Heart left ventricle (tissue), 16 donors: ENCODE measurements at regions of chr19 and their contacts with region 1.

Region 1: DNA sequence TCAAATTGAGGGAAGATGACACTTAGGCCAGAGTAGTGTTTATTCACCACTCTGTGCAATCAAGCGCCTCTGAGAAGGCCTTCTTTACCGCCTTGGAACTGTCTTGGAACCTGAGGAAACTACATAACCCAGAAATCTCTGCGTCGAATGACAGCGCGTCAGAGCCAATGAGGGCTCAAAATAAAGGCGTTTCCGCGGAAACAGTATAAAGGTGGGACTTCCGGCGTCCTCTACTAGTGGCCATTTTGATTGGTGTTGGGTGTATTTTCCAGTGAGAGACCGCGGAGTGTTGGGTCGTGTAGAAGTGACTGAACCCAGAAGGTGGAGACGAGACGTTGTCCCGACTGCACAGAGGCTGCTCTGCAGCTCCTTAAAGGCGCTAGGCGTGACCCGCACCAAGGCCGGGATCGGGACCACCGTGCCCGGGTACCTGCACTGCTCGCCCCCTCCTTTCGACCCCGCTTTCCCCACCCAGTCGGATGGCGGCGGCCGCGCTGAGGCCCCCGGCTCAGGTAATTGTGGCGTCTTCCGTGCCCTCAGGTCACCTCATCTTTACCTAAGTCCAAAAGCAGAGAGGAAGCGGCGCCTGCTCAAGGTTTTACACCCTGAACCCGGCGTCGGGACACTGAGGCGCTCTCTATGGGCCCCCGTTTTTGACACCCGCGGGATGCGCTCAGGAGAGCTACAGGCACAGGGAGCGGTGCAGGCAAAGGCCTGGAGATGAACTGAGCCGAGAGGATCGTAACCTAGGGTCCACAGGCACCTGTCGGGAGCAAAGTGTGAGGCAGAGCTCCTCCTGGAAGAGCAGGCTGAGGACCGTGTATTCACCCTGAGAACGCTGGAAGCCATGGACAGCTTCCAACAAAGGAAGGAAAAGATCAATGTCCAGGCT is at the start of gene ZNF776:
- DNase-seq: peak; percentile 79 to 89 (median 88)
- ATAC-seq: peak; percentile 93 to 99 (median 98)
- H3K4me3 ChIP-seq: peak within 1 kb of the TSS; percentile 62 to 99 (median 90)
- H3K27ac ChIP-seq: peak within 1 kb of the TSS; percentile 45 to 91 (median 84)
- H3K4me1 ChIP-seq: peaks cover 0 to 29% (median 15%) of the 10 kb centered on the region in 12 donors
- H3K27me3 ChIP-seq: no peaks in the 10 kb centered on the region
- CTCF ChIP-seq: no peak
- POLR2A ChIP-seq: peak in 1 of 2 donors; percentile 63
- total RNA-seq, gene ZNF776: 8.1 to 17.3 (median 12.9) TPM

Region 2: GRCh38 chr19:57830071-57830602 is 83.3 kb after region 1 on chr19 and contains the start of gene ZNF587B:
- intact Hi-C with region 1: no loop called
- DNase-seq: peak; percentile 72 to 83 (median 76)
- ATAC-seq: peak; percentile 89 to 95 (median 92)
- H3K4me3 ChIP-seq: peak within 1 kb of the TSS; percentile 13 to 73 (median 52)
- H3K27ac ChIP-seq: peak within 1 kb of the TSS; percentile 34 to 83 (median 74)
- H3K4me1 ChIP-seq: peaks cover 0 to 31% (median 14%) of the 10 kb centered on the region in 12 donors
- H3K27me3 ChIP-seq: no peaks in the 10 kb centered on the region
- CTCF ChIP-seq: peak in 11 of 12 donors; percentile 14 to 67 (median 43)
- POLR2A ChIP-seq: peak in 1 of 2 donors; percentile 25
- total RNA-seq, gene ZNF587B: 4.6 to 9.2 (median 6.5) TPM

Region 3: DNA sequence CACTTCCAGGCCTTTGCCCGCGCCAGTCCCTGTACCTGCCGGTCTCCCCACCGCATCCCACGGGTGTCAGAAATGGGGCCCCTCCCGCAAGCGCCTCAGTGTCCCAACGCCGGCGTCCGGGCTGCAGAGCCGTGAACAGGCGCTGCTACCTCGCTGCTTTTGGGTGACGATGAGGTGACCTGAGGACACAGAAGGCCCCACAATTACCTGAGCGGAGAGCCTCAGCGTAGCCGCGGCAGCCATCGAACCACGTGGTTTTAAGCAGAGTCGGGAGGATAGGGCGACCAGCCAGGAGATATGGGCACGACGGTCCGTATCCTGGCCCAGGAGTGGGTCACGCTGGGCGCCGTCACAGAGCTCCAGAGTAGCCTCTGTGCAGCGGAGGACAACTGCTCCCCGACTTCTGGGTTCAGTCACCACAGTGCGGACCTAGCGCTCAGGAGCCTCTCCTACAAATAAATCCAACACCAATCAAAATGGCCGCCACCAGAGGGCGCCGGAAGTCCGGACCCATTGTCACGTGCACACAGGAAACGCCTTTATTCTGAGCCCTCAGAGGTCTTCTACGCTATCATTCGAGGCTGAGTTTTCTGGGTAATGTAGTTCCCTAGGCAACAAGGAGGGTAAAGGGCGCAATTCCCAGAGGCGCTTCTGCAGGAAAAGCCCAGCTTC is 141.9 kb after region 1 on chr19 and contains the start of gene ZNF814:
- intact Hi-C with region 1: loop called in 3 of 10 experiments (anchors 10 kb)
- DNase-seq: peak; percentile 86 to 90 (median 88)
- ATAC-seq: peak; percentile 91 to 96 (median 94)
- H3K4me3 ChIP-seq: peak within 1 kb of the TSS; percentile 25 to 91 (median 78)
- H3K27ac ChIP-seq: peak within 1 kb of the TSS in 11 of 12 donors; percentile 56 to 84 (median 77)
- H3K4me1 ChIP-seq: peaks cover 0 to 22% (median 11%) of the 10 kb centered on the region in 12 donors
- H3K27me3 ChIP-seq: no peaks in the 10 kb centered on the region
- CTCF ChIP-seq: peak; percentile 24 to 77 (median 49)
- POLR2A ChIP-seq: peak in 1 of 2 donors; percentile 25
- total RNA-seq, gene ZNF814: 8.7 to 16.4 (median 10.5) TPM

Region 4: DNA sequence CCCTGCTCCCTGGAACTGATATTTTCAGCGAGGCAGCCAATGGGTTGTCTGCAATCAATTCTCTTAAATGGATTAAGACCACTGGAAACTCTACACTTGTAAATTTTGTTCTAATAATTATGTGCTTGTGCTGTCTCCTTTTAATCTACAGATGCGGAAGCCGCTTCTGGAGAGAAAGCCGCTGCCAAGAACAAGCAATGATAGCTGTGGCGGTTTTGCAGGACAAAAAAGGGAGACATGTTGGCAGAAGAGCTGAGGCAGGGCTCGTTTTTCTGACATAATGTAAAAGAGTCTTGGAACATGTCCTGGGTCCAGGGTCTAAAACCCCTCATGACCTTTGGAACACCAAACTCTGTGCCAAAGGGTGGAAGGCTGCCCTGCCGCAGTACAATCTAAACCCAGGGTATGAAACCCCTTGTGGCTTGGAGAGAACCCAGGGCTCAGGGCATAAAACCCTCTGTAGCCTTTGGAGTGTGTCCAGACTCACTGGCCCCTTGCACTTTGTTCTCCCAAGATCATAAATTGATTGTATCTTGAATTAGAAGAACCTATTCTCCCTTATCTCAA is 156.9 kb after region 1 on chr19:
- intact Hi-C with region 1: loop called in 5 of 10 experiments (anchors 10 kb)
- DNase-seq: no peak
- ATAC-seq: no peak
- H3K4me3 ChIP-seq: no peak overlapping the region
- H3K27ac ChIP-seq: no peak overlapping the region
- H3K4me1 ChIP-seq: peaks cover 0 to 8% (median 0%) of the 10 kb centered on the region in 12 donors
- H3K27me3 ChIP-seq: no peaks in the 10 kb centered on the region
- CTCF ChIP-seq: no peak
- POLR2A ChIP-seq: no peak